ENCODE measurements at regions of chr9 and their contacts with region 1.

Region 1: GRCh38 chr9:19028835-19029451 is 4.1 kb downstream of the SAXO1 start:
- DNase-seq: peak; percentile 79
- H3K4me3 Mint-ChIP-seq: no peak overlapping the region
- H3K27ac Mint-ChIP-seq: no peak overlapping the region
- H3K4me1 Mint-ChIP-seq: peaks cover 11% of the 10 kb centered on the region
- H3K27me3 Mint-ChIP-seq: peaks cover 2% of the 10 kb centered on the region
- CTCF ChIP-seq: peak; percentile 64

Region 2: GRCh38 chr9:18208154-18209059 is 820.5 kb before region 1 on chr9:
- CTCF ChIA-PET with region 1: interaction called, 13 read pairs
- POLR2A ChIA-PET with region 1: no interaction called
- intact Hi-C with region 1: no loop called
- DNase-seq: peak; percentile 71
- H3K4me3 Mint-ChIP-seq: no peak overlapping the region
- H3K27ac Mint-ChIP-seq: no peak overlapping the region
- H3K4me1 Mint-ChIP-seq: no peaks in the 10 kb centered on the region
- H3K27me3 Mint-ChIP-seq: peaks cover 62% of the 10 kb centered on the region
- CTCF ChIP-seq: peak; percentile 54

Region 3: DNA sequence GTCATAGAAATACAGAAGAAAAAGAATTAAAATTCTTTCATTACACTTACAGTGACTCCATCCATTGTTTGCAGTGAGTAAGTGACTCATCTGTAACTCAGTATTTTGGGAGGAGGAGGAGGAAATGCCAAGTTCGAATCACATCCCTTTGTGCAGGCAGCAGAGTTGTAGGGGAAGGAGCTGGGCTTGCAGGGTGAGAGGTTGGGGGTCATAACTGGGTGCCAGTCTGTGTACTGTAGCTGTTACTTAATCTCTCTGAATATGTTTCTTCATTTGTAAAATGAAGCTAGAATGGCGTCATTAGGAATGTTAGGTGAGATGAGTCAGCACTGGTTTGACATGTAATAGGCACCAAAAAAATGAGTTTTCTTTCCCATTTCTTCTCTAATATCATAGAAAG is 790.7 kb before region 1 on chr9:
- CTCF ChIA-PET with region 1: interaction called, 10 read pairs
- POLR2A ChIA-PET with region 1: interaction called, 3 read pairs
- intact Hi-C with region 1: no loop called
- DNase-seq: peak; percentile 93
- H3K4me3 Mint-ChIP-seq: peak overlapping the region; percentile 55
- H3K27ac Mint-ChIP-seq: peak overlapping the region; percentile 88
- H3K4me1 Mint-ChIP-seq: peaks cover 33% of the 10 kb centered on the region
- H3K27me3 Mint-ChIP-seq: no peaks in the 10 kb centered on the region
- CTCF ChIP-seq: no peak

Region 4: DNA sequence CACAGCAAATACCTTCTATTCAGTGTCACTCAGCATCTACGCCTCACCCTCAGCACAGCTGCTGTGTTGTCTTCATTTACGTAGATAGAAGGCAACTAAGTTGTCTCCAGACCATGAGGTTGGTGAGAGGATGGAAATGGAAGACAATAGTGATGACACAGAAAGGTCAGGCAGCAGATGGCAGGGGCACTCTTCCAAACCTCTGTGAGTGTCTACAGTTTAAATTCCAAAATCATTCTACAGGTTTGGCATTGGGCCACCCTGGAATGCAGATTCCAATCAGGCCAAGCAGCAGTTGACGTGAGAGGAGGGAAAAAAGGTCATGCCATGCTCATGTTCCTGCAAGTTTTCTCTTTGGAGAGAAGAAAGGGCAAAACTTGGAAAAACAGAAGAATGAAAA is 623.7 kb before region 1 on chr9:
- CTCF ChIA-PET with region 1: interaction called, 5 read pairs
- POLR2A ChIA-PET with region 1: no interaction called
- intact Hi-C with region 1: loop called (anchors 5 kb)
- DNase-seq: peak; percentile 61
- H3K4me3 Mint-ChIP-seq: no peak overlapping the region
- H3K27ac Mint-ChIP-seq: no peak overlapping the region
- H3K4me1 Mint-ChIP-seq: peaks cover 15% of the 10 kb centered on the region
- H3K27me3 Mint-ChIP-seq: no peaks in the 10 kb centered on the region
- CTCF ChIP-seq: peak; percentile 13

Region 5: DNA sequence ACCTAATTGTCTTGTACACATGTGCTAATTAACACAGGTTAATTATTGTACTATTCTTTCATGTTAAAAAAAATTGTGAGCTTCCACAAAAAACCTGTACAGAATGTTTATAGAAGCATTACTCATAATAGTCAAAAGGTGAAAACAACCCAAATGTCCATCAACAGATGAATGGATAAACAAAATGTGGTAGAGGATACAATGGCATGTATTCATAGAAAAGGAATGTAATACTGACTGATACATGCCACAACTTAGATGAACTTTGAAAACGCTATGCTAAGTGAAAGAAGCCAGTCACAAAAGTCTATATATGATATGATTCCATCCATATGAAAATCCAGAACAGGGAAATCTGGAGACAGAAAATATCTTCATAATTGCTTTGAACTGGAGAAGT is 45.9 kb after region 1 on chr9:
- CTCF ChIA-PET with region 1: no interaction called
- POLR2A ChIA-PET with region 1: no interaction called
- intact Hi-C with region 1: no loop called
- DNase-seq: peak; percentile 33
- H3K4me3 Mint-ChIP-seq: no peak overlapping the region
- H3K27ac Mint-ChIP-seq: no peak overlapping the region
- H3K4me1 Mint-ChIP-seq: peaks cover 9% of the 10 kb centered on the region
- H3K27me3 Mint-ChIP-seq: no peaks in the 10 kb centered on the region
- CTCF ChIP-seq: no peak

Region 6: GRCh38 chr9:19456996-19457692 is 428.2 kb after region 1 on chr9:
- CTCF ChIA-PET with region 1: no interaction called
- POLR2A ChIA-PET with region 1: no interaction called
- intact Hi-C with region 1: loop called (anchors 5 kb)
- DNase-seq: peak; percentile 80
- H3K4me3 Mint-ChIP-seq: peak overlapping the region; percentile 33
- H3K27ac Mint-ChIP-seq: no peak overlapping the region
- H3K4me1 Mint-ChIP-seq: no peaks in the 10 kb centered on the region
- H3K27me3 Mint-ChIP-seq: no peaks in the 10 kb centered on the region
- CTCF ChIP-seq: peak; percentile 91